Esophagus squamous epithelium (tissue), 5 donors: ENCODE measurements at regions of chr2 and their contacts with region 1.

Region 1: GRCh38 chr2:231925303-231926179 is 655 bp downstream of the NPPC start:
- DNase-seq: no peak
- H3K4me3 ChIP-seq: peak overlapping the region; percentile 40 to 64 (median 52)
- H3K27ac ChIP-seq: peak overlapping the region in 2 of 4 donors; percentile 29 to 45
- H3K4me1 ChIP-seq: peaks cover 19 to 38% (median 19%) of the 10 kb centered on the region in 3 donors
- H3K27me3 ChIP-seq: peaks cover 0 to 96% (median 9%) of the 10 kb centered on the region in 4 donors
- CTCF ChIP-seq: peak; percentile 84 to 95 (median 90)
- POLR2A ChIP-seq: no peak

Region 2: DNA sequence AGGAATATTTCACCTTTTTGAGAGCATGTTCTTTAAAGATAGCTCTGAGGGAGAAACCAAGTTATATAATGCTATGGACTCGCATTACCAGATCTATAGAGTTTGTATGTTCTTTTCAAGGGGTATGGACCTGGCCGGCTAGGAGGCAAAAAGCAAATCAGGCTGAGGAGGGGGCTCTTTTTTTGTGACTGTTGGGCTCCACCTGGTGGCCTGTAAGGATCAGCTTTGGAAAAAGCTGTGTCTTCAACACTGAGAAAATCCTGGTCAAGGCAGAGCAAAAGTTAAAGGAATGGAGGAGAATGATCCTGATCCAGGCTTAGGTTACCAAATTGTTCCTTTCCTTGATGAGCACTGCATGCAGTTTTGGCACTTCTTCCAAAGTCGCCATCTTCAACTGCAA is 216.5 kb after region 1 on chr2:
- intact Hi-C with region 1: loop called (anchors 5 kb)
- DNase-seq: no peak
- H3K4me3 ChIP-seq: no peak overlapping the region
- H3K27ac ChIP-seq: no peak overlapping the region
- H3K4me1 ChIP-seq: no peaks in the 10 kb centered on the region
- H3K27me3 ChIP-seq: no peaks in the 10 kb centered on the region
- CTCF ChIP-seq: peak; percentile 43 to 77 (median 64)
- POLR2A ChIP-seq: no peak

Region 3: GRCh38 chr2:232321156-232321816 is 395.7 kb after region 1 on chr2:
- intact Hi-C with region 1: loop called (anchors 5 kb)
- DNase-seq: no peak
- H3K4me3 ChIP-seq: no peak overlapping the region
- H3K27ac ChIP-seq: peak overlapping the region in 1 of 4 donors; percentile 60
- H3K4me1 ChIP-seq: peaks cover 21 to 62% (median 22%) of the 10 kb centered on the region in 3 donors
- H3K27me3 ChIP-seq: no peaks in the 10 kb centered on the region
- CTCF ChIP-seq: peak in 1 of 6 experiments; percentile 17
- POLR2A ChIP-seq: no peak